WTC11 (cell line): ENCODE measurements at regions of chr15 and their contacts with region 1.

Region 1: DNA sequence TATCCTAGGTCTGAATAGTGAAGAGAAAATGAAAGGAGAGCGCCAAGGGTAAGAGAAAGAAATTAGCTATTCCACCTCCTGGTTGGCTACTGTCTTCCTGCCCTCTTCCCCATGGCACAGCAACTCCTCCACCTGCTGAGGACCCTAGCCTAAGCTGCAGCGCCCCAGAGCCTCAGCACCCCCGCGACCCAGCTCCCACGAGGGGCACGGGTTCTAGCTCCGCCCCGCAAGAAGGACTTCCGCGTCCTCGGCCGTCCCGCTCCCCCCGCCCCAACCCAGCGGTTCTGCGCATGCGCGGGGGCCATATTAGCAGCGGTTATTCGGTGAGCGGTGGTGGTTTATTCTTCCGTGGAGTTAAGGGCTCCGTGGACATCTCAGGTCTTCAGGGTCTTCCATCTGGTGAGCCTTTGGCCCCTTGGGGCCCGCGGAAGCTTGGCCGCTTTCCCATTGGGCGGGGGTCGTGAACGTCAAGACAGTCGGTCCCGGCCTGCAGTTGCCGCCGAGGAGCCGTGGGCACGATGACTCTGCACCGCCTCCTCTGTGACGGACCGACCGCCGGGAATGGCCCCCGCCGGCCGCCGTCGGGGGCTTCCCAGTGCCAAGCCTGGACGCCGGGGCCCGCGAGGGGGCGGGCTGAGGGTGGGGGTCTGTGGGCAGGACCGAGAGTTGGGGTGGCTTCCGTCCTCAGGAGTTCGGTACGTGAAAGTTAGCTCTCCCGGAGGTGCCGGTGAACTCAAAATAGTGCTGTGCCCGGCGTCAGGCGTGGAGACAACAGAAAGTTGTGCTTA is at the start of gene PSMA4:
- DNase-seq: peak; percentile 90
- ATAC-seq: peak; percentile 85
- H3K4me3 Mint-ChIP-seq: peak within 1 kb of the TSS; percentile 96
- H3K27ac Mint-ChIP-seq: peak within 1 kb of the TSS; percentile 96
- H3K4me1 Mint-ChIP-seq: peaks cover 11% of the 10 kb centered on the region
- H3K27me3 Mint-ChIP-seq: no peaks in the 10 kb centered on the region
- CTCF ChIP-seq: no peak
- total RNA-seq, gene PSMA4: 268 to 281 TPM (median 269 TPM) in 3 replicates

Region 2: GRCh38 chr15:78506971-78507830 is 33.1 kb before region 1 on chr15 and contains the start of gene HYKK:
- CTCF ChIA-PET with region 1: interaction called, 10 read pairs
- POLR2A ChIA-PET with region 1: no interaction called
- DNase-seq: peak; percentile 96
- ATAC-seq: peak; percentile 94
- H3K4me3 Mint-ChIP-seq: peak within 1 kb of the TSS; percentile 90
- H3K27ac Mint-ChIP-seq: peak within 1 kb of the TSS; percentile 93
- H3K4me1 Mint-ChIP-seq: peaks cover 7% of the 10 kb centered on the region
- H3K27me3 Mint-ChIP-seq: peaks cover 30% of the 10 kb centered on the region
- CTCF ChIP-seq: no peak
- total RNA-seq, gene HYKK: 3.1 to 4.9 TPM (median 4.4 TPM) in 3 replicates

Region 3: DNA sequence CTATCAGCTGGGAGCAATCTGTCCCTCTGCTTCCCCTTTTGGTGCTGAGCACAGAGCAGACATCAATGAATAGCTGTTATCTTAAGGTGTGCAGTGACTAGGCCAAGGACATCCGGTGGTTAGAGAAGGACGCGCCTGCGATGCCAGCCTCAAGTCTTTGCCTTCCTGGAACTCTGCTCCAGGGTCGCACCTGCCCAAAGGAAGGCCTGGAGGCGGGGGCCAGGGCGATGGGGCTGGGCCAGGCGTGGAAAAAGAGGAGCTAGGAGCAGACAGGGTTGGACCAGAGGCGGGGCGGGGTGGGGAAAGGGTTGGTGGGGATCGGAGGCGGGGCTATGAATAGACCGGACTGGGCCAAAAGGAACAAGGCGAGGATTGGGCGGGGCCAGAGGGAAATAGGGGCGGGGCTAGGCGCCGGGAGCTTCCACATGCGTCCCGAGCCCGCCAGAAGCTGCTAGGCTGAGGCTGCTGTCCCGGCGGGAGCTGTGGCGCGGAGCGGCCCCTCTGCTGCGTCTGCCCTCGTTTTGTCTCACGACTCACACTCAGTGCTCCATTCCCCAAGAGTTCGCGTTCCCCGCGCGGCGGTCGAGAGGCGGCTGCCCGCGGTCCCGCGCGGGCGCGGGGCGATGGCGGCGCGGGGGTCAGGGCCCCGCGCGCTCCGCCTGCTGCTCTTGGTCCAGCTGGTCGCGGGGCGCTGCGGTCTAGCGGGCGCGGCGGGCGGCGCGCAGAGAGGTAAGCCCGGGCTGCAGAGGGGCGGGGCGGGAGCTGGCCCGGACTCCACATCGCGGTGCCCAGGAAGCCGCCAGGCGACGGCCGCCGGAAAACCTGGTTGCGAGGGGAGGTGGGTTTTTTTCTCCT is 25.0 kb after region 1 on chr15 and contains the start of gene CHRNA5:
- CTCF ChIA-PET with region 1: interaction called, 3 read pairs
- POLR2A ChIA-PET with region 1: interaction called, 35 read pairs
- DNase-seq: peak; percentile 100
- ATAC-seq: peak; percentile 96
- H3K4me3 Mint-ChIP-seq: peak within 1 kb of the TSS; percentile 90
- H3K27ac Mint-ChIP-seq: peak within 1 kb of the TSS; percentile 80
- H3K4me1 Mint-ChIP-seq: peaks cover 23% of the 10 kb centered on the region
- H3K27me3 Mint-ChIP-seq: no peaks in the 10 kb centered on the region; the same call in 1 of the 2 replicates
- CTCF ChIP-seq: no peak
- total RNA-seq, gene CHRNA5: 21.0 to 23.3 TPM (median 21.2 TPM) in 3 replicates